ENCODE measurements at regions of chr2 and their contacts with region 1.

Region 1: DNA sequence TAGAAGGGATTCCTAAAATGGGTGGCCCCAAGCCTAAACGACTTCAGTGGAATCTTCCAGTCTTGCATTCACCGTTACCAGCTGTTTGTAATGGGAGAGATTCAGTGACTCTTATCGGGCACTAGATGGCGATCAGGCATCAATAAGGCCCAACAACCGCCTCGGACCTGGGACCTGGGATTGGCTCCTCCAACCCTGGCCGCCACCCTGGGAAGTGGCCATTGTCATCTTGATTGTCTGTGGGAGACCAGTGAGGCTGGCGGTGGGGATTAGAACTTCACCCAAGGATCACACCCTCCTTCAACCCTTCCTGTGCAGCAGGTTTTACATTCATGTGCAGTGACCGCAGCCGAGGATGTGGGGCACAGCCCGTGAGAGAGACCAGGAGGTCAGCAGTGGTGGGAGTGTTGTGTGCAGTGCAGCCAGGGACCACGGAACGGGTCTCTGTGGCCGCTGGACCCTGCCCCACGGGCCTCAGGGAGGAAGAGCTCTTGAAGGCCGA is 85.3 kb downstream of the SPP2 start:
- DNase-seq: peak; percentile 13 to 52 (median 40)
- ATAC-seq: peak; percentile 73
- H3K4me3 ChIP-seq: peak overlapping the region; percentile 2
- H3K4me3 Mint-ChIP-seq: peak overlapping the region in 2 of 10 donors; percentile 9 to 30
- H3K27ac ChIP-seq: no peak overlapping the region
- H3K27ac Mint-ChIP-seq: peak overlapping the region; percentile 31 to 83 (median 56)
- H3K4me1 ChIP-seq: peaks cover 23 to 24% of the 10 kb centered on the region in 2 donors
- H3K4me1 Mint-ChIP-seq: peaks cover 6 to 31% (median 29%) of the 10 kb centered on the region in 7 donors
- H3K27me3 ChIP-seq: no peaks in the 10 kb centered on the region
- H3K27me3 Mint-ChIP-seq: peaks cover 0 to 17% (median 0%) of the 10 kb centered on the region in 5 donors

Region 2: DNA sequence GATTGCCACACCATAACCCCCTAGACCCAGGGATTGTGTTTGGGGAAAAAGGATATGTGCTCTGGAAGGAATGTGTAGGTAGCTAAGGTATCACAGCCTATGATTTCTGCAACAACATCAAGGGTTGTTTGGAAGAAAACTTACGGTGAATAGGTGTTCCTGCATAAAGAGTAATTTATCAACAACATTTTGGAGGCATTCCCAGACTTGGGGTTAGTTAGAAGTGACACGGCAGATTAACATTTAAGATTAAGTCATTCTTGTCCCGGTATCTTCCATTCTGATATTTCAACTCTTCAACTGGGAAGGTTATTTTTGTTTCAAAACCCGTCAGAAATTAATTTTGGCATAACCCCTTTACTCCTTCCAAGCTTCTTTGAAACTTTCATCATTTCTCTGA is 19.7 kb before region 1 on chr2:
- CTCF ChIA-PET with region 1: no interaction called
- POLR2A ChIA-PET with region 1: no interaction called
- intact Hi-C with region 1: no loop called
- DNase-seq: no peak
- ATAC-seq: no peak
- H3K4me3 ChIP-seq: no peak overlapping the region
- H3K4me3 Mint-ChIP-seq: no peak overlapping the region
- H3K27ac ChIP-seq: no peak overlapping the region
- H3K27ac Mint-ChIP-seq: no peak overlapping the region
- H3K4me1 ChIP-seq: no peaks in the 10 kb centered on the region
- H3K4me1 Mint-ChIP-seq: peaks cover 0 to 3% (median 0%) of the 10 kb centered on the region in 7 donors
- H3K27me3 ChIP-seq: no peaks in the 10 kb centered on the region
- H3K27me3 Mint-ChIP-seq: peaks cover 0 to 58% (median 6%) of the 10 kb centered on the region in 5 donors

Region 3: GRCh38 chr2:234146087-234146826 is 10.5 kb after region 1 on chr2:
- CTCF ChIA-PET with region 1: interaction called, 5 read pairs
- POLR2A ChIA-PET with region 1: no interaction called
- intact Hi-C with region 1: loop called in 1 of 2 experiments (anchors 1 kb)
- DNase-seq: no peak
- ATAC-seq: no peak
- H3K4me3 ChIP-seq: no peak overlapping the region
- H3K4me3 Mint-ChIP-seq: peak overlapping the region; percentile 17 to 74 (median 46)
- H3K27ac ChIP-seq: no peak overlapping the region
- H3K27ac Mint-ChIP-seq: peak overlapping the region in 8 of 9 donors; percentile 25 to 87 (median 68)
- H3K4me1 ChIP-seq: peaks cover 29 to 37% of the 10 kb centered on the region in 2 donors
- H3K4me1 Mint-ChIP-seq: peaks cover 19 to 57% (median 44%) of the 10 kb centered on the region in 7 donors
- H3K27me3 ChIP-seq: no peaks in the 10 kb centered on the region
- H3K27me3 Mint-ChIP-seq: no peaks in the 10 kb centered on the region

Region 4: DNA sequence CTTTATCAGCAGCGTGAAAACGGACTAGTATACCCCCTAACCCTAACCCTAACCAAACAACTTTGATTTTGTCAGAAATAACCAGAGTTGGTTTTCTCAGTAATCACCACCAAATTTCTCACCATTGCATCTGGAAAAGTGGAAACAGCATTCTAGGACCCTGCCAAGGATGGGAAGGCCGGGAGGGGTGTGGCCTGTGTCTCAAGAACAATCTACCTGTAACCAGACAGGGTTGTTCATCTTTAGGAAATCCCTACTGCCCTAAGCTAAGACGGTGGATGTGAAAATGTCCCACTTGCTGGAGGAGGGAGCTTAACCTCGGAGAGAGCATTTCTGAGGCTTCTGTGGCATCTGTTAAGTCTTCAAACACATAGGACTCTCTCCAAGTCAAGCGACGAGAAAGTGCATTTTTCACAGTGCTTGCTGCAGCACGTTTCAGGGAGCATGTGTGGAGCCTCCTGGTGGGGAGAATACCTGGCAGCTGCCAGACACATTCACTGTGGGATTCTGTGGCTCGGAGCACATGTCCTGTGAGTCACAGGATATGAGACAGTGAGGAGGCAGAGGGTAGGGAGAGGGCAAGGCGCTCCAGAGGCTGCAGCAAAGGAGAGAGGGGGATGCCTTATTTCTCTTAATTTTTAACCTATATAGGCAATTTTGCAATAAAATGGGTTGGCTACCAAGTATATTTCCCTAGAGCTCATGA is 122.2 kb after region 1 on chr2:
- CTCF ChIA-PET with region 1: interaction called, 3 read pairs
- POLR2A ChIA-PET with region 1: no interaction called
- intact Hi-C with region 1: loop called in 1 of 2 experiments (anchors 1 kb)
- DNase-seq: peak in 1 of 9 donors; percentile 42
- ATAC-seq: peak; percentile 34
- H3K4me3 ChIP-seq: no peak overlapping the region
- H3K4me3 Mint-ChIP-seq: no peak overlapping the region
- H3K27ac ChIP-seq: no peak overlapping the region
- H3K27ac Mint-ChIP-seq: peak overlapping the region in 1 of 9 donors; percentile 35
- H3K4me1 ChIP-seq: no peaks in the 10 kb centered on the region
- H3K4me1 Mint-ChIP-seq: peaks cover 0 to 30% (median 20%) of the 10 kb centered on the region in 7 donors
- H3K27me3 ChIP-seq: no peaks in the 10 kb centered on the region
- H3K27me3 Mint-ChIP-seq: no peaks in the 10 kb centered on the region

Region 5: DNA sequence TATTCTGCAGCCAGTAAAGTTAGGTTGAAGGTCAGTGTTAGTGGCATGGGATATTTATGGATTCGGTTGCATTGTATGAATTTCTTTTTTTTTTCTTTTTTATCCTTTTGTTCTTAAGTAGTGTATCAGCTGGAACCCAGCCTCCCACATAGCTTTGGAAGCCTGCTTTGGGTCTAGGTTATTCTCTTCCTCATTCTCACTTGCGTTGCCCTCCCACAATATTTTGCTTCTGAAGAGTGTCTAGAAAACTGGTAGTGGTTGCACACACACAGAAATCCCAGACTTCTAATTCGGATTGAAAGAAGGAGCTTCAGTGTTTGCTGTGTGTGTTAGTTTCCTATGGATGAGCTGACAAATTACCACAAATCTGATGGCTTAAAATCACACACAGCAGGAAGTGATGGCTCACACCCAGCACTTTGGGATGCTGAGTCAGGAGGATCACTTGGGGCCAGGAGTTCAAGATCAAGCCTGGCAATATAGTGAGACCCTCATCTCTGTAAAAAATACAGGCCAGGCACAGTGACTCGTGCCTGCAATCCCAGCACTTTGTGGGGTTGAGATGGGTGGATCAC is 256.4 kb after region 1 on chr2:
- CTCF ChIA-PET with region 1: no interaction called
- POLR2A ChIA-PET with region 1: no interaction called
- intact Hi-C with region 1: loop called in 1 of 2 experiments (anchors 1 kb)
- DNase-seq: no peak
- ATAC-seq: no peak
- H3K4me3 ChIP-seq: no peak overlapping the region
- H3K4me3 Mint-ChIP-seq: peak overlapping the region in 9 of 10 donors; percentile 35 to 84 (median 46)
- H3K27ac ChIP-seq: peak overlapping the region; percentile 53
- H3K27ac Mint-ChIP-seq: peak overlapping the region; percentile 17 to 98 (median 94)
- H3K4me1 ChIP-seq: peaks cover 21 to 53% of the 10 kb centered on the region in 2 donors
- H3K4me1 Mint-ChIP-seq: peaks cover 34 to 73% (median 65%) of the 10 kb centered on the region in 7 donors
- H3K27me3 ChIP-seq: no peaks in the 10 kb centered on the region
- H3K27me3 Mint-ChIP-seq: no peaks in the 10 kb centered on the region

Region 6: DNA sequence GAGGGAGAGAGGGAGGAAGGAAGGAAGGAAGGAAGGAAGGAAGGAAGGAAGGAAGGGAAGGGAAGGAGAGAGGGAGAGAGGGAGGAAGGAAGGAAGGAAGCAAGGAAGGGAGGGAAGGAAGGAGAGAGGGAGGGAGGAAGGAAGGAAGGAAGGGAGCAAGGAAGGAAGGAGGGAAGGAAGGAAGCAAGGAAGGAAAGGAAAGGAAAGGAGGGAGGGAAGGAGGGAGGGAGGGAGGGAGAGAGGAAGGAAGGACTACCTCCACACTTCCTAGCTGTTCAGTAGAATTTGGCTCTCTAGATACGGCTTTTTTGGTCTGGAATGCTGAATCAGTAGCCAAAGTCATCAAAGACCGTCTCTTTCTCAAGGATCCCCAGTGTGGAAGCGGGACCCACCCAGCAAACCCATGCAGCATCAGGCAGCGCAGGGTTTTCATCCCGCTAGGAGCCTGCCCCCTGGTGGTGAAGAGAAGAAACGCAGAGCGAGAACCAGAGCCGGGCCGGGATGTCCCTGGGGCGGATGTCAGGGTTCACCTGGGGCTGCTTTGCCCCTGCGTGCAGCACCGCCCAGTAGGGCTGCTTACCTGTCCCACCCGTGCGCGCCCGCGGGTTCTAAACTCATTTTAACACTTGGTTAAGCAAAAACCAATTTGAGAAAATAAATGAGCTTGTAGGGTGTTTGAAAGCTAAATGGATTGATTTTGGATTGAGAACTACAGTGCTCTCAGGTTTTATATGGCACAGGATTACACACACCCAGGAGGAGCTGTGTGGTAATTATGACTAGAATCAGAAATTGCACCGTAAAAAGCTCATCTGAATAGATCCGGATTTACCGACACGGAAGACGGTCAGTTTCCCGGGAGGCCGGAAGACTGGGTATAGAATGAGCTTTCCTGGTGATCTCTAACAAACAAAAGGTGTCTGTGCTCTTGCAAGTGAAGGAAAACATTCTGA is 409.2 kb after region 1 on chr2:
- CTCF ChIA-PET with region 1: interaction called, 6 read pairs
- POLR2A ChIA-PET with region 1: no interaction called
- intact Hi-C with region 1: loop called (anchors 1 kb)
- DNase-seq: peak; percentile 54 to 83 (median 69)
- ATAC-seq: peak; percentile 93
- H3K4me3 ChIP-seq: no peak overlapping the region
- H3K4me3 Mint-ChIP-seq: no peak overlapping the region
- H3K27ac ChIP-seq: no peak overlapping the region
- H3K27ac Mint-ChIP-seq: no peak overlapping the region
- H3K4me1 ChIP-seq: peaks cover 0 to 5% of the 10 kb centered on the region in 2 donors
- H3K4me1 Mint-ChIP-seq: peaks cover 0 to 9% (median 1%) of the 10 kb centered on the region in 7 donors
- H3K27me3 ChIP-seq: no peaks in the 10 kb centered on the region
- H3K27me3 Mint-ChIP-seq: peaks cover under 1 to 31% (median 13%) of the 10 kb centered on the region in 5 donors

Region 7: DNA sequence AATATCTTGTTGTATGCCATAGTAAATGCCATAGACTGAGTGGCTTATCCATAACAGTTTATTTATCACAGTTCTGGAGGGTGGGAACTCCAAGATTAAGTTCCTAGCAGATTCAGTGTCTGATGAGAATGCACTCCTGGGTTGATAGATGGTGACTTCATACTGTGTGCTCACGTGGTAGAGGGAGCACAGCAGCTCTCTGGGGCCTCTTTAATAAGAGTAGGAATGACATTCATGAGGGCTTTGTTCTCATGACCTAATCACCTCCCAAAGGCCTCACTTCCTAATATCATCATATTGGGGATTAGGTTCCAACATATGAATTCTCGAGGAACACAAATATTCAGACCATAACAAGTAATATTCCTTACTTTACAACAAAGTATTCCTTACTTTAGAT is 718.0 kb after region 1 on chr2:
- CTCF ChIA-PET with region 1: no interaction called
- POLR2A ChIA-PET with region 1: no interaction called
- intact Hi-C with region 1: no loop called
- DNase-seq: no peak
- ATAC-seq: no peak
- H3K4me3 ChIP-seq: no peak overlapping the region
- H3K4me3 Mint-ChIP-seq: no peak overlapping the region
- H3K27ac ChIP-seq: no peak overlapping the region
- H3K27ac Mint-ChIP-seq: no peak overlapping the region
- H3K4me1 ChIP-seq: no peaks in the 10 kb centered on the region
- H3K4me1 Mint-ChIP-seq: no peaks in the 10 kb centered on the region
- H3K27me3 ChIP-seq: no peaks in the 10 kb centered on the region
- H3K27me3 Mint-ChIP-seq: peaks cover under 1 to 29% (median 7%) of the 10 kb centered on the region in 5 donors